Mucosa of descending colon (tissue), 3 donors: ENCODE measurements at regions of chr2 and their contacts with region 1.

Region 1: GRCh38 chr2:97806738-97807618 is 93.6 kb downstream of the ZAP70 start:
- DNase-seq: peak; percentile 81 to 89 (median 88)
- ATAC-seq: peak; percentile 99
- H3K4me3 ChIP-seq: no peak overlapping the region
- H3K4me1 ChIP-seq: no peaks in the 10 kb centered on the region
- CTCF ChIP-seq: peak; percentile 60

Region 2: GRCh38 chr2:98108110-98108509 is 301.1 kb after region 1 on chr2:
- intact Hi-C with region 1: no loop called
- DNase-seq: no peak
- ATAC-seq: no peak
- H3K4me3 ChIP-seq: no peak overlapping the region
- H3K4me1 ChIP-seq: no peaks in the 10 kb centered on the region
- CTCF ChIP-seq: no peak

Region 3: DNA sequence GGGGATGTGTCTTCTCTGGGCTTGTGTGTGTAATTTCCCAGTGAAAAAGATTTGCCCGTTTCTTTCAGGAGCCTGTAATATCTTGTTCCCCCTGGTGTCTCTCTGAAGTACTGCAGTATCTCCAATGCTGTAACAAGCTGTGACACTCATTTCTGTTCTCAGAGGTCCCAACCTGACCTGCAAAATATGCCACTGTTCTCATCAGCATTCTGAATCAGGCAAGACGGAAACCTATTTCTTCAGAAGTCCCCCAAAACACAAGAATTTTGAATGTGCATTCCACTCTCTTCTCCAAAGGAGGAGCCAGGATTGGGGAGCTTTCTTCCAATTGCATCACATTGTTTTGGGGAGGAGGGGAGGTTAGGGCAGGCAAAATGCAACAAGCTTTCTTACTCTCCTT is 462.3 kb after region 1 on chr2:
- intact Hi-C with region 1: loop called (anchors 2 to 10 kb)
- DNase-seq: peak in 1 of 3 donors; percentile 83
- ATAC-seq: peak; percentile 84
- H3K4me3 ChIP-seq: no peak overlapping the region
- H3K4me1 ChIP-seq: no peaks in the 10 kb centered on the region
- CTCF ChIP-seq: peak; percentile 56

Region 4: GRCh38 chr2:98385050-98385699 is 578.2 kb after region 1 on chr2:
- intact Hi-C with region 1: loop called in 1 of 2 experiments (anchors 5 kb)
- DNase-seq: peak; percentile 67 to 87 (median 83)
- ATAC-seq: peak; percentile 96
- H3K4me3 ChIP-seq: no peak overlapping the region
- H3K4me1 ChIP-seq: no peaks in the 10 kb centered on the region
- CTCF ChIP-seq: peak; percentile 73